Naive thymus-derived CD4-positive, alpha-beta T cell (primary cell): ENCODE measurements at regions of chr1 and their contacts with region 1.

Region 1: DNA sequence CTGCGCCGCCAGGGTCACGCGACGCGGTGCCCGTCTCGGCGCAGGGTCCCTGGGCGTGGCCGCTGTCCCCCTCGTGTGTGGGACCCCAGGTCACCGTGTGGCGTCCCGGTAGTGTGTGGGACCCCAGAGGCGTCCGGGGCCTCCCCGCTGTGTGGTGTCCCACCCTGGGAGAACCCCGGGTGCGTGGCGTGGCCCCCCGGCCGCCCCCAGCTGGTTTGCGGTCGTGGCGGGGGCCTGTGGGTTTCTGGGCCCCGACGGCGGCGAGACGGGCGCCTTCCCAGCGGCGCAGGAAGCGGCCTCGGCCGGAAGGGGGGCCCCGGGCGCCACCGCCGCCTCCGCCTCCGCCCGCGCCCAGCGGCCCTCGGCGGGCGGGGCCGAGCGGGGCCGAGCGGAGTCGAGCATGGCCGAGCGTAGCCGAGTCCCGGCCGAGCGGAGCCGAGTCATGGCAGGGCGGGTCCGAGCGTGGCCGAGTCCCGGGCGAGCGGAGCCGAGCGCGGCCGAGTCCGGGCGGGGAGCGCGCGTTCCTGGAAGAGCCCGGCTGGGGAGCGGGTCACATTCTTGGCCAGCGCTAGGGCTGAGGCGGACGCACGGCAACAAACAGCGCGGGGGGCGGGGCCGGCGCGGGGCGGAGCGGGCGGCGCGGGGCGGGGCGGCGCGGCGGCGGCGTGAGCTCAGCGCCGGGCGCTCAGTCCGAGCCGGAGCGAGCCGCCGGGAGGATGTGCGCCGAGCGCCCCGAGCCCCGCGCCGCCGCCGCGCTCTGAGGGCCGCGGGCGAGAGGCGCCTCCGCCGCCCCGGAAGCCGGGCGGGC is 569 bp upstream of the SKI start:
- DNase-seq: peak; percentile 87 to 98 (median 97)
- ATAC-seq: peak; percentile 88
- H3K4me3 ChIP-seq: peak overlapping the region; percentile 33
- H3K4me3 Mint-ChIP-seq: peak overlapping the region in 9 of 10 donors; percentile 56 to 83 (median 69)
- H3K27ac ChIP-seq: peak overlapping the region; percentile 72
- H3K27ac Mint-ChIP-seq: peak overlapping the region in 4 of 9 donors; percentile 26 to 80 (median 62)
- H3K4me1 ChIP-seq: peaks cover 5 to 14% of the 10 kb centered on the region in 2 donors
- H3K4me1 Mint-ChIP-seq: peaks cover 9 to 24% (median 17%) of the 10 kb centered on the region in 7 donors
- H3K27me3 ChIP-seq: no peaks in the 10 kb centered on the region
- H3K27me3 Mint-ChIP-seq: peaks cover 0 to 8% (median 0%) of the 10 kb centered on the region in 5 donors

Region 2: DNA sequence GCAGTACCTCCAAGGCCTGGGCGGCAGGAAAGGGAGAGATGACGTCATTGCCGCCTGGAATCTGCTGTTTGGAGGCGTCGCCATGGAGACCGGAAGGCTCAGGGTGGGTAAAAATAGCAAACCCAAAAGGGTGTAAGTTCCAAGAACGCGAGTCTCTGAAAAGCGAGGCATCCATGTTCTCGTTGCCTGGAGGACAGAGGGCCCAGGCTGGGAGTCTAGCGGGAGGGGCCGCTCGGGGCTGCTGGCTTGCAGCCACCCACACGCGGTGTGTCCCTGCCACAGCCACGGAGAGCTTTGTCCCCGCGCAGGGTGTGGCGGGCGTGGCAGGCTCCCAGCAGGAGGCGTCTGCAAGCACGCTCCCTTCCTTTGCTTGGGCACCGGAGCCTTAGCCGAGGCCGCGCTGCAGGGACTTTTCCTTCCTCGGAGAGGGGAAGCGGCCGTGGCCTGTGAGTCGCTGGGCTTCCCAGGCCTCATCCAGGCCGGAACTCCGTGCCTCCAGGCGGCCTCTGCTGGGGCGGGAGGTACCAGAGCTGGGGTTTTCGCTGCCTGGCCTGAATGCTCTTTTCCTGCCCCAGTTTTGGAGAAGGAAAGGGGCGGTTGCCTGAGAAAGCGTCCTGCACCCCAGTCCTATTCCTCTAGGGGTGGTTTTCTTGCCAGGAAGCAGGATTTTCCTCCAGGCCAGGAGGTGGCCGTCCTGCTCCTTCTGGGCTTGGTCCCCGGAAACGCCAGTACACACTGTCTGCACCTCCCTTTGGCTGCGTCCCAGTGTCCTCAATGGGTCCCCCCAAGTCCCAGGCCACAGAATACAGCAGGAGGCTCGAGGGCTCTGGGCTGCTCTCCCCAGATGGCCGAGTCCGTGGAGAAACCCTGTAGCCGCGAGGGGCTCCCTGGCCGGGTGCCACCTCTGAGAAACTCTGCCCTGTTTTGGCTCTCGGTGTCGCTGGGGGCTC is 14.7 kb before region 1 on chr1:
- CTCF ChIA-PET with region 1: no interaction called
- POLR2A ChIA-PET with region 1: interaction called, 6 read pairs
- intact Hi-C with region 1: loop called (anchors 1 to 2 kb)
- DNase-seq: peak in 8 of 9 donors; percentile 44 to 71 (median 66)
- ATAC-seq: peak; percentile 79
- H3K4me3 ChIP-seq: peak overlapping the region; percentile 41
- H3K4me3 Mint-ChIP-seq: peak overlapping the region in 6 of 10 donors; percentile 17 to 74 (median 53)
- H3K27ac ChIP-seq: peak overlapping the region; percentile 46
- H3K27ac Mint-ChIP-seq: peak overlapping the region in 7 of 9 donors; percentile 17 to 70 (median 39)
- H3K4me1 ChIP-seq: peaks cover 8 to 13% of the 10 kb centered on the region in 2 donors
- H3K4me1 Mint-ChIP-seq: peaks cover 0 to 11% (median 2%) of the 10 kb centered on the region in 7 donors
- H3K27me3 ChIP-seq: no peaks in the 10 kb centered on the region
- H3K27me3 Mint-ChIP-seq: no peaks in the 10 kb centered on the region

Region 3: DNA sequence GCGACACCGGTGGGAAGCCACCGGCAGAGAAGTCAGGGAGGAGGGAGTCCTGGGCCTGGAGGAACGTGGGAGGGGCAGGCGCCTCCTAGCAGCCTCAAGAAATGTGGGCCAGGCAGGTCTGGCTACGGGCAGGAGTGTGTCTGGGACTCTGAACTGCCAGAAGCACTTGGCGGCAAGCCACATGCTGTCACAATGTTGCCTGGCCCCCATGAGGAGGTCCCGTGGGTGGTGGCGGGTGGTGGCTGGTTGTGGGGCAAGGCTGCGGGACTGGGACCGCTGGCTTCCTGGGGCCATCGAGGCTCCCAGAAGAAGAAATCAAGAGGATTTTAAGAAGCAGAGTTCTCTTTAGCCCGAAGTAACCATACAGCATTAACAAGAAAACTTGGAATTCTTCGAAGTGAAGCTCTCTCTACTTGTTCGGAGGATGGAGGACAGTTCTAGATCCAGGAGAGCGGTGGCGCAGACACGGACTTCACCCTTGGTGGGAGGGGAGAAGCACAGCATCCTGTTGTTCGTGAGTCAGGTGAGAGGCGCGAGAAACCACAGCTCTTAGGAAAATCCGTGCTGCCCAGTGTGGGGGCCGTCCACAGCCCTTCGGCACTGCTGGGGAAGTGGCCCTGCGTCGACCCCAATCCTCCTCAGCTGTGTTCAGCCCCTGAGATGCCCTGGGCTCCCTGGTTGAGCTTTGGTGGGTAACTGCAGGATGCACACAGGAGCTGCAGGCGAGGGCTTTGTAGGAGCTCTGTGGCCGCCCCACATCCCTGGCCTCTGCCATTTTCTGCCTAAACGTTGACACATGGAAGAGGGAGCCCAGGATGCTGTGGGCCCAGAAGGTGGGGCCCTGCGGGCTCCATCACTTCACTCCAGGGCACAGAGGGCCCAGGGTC is 13.0 kb after region 1 on chr1:
- CTCF ChIA-PET with region 1: interaction called, 4 read pairs
- POLR2A ChIA-PET with region 1: interaction called, 99 read pairs
- intact Hi-C with region 1: no loop called
- DNase-seq: peak in 3 of 9 donors; percentile 36 to 68 (median 37)
- ATAC-seq: peak; percentile 30
- H3K4me3 ChIP-seq: peak overlapping the region; percentile 26
- H3K4me3 Mint-ChIP-seq: peak overlapping the region; percentile 40 to 98 (median 84)
- H3K27ac ChIP-seq: peak overlapping the region; percentile 59
- H3K27ac Mint-ChIP-seq: peak overlapping the region; percentile 59 to 97 (median 93)
- H3K4me1 ChIP-seq: peaks cover 47 to 84% of the 10 kb centered on the region in 2 donors
- H3K4me1 Mint-ChIP-seq: peaks cover 66 to 92% (median 83%) of the 10 kb centered on the region in 7 donors
- H3K27me3 ChIP-seq: no peaks in the 10 kb centered on the region
- H3K27me3 Mint-ChIP-seq: no peaks in the 10 kb centered on the region

Region 4: DNA sequence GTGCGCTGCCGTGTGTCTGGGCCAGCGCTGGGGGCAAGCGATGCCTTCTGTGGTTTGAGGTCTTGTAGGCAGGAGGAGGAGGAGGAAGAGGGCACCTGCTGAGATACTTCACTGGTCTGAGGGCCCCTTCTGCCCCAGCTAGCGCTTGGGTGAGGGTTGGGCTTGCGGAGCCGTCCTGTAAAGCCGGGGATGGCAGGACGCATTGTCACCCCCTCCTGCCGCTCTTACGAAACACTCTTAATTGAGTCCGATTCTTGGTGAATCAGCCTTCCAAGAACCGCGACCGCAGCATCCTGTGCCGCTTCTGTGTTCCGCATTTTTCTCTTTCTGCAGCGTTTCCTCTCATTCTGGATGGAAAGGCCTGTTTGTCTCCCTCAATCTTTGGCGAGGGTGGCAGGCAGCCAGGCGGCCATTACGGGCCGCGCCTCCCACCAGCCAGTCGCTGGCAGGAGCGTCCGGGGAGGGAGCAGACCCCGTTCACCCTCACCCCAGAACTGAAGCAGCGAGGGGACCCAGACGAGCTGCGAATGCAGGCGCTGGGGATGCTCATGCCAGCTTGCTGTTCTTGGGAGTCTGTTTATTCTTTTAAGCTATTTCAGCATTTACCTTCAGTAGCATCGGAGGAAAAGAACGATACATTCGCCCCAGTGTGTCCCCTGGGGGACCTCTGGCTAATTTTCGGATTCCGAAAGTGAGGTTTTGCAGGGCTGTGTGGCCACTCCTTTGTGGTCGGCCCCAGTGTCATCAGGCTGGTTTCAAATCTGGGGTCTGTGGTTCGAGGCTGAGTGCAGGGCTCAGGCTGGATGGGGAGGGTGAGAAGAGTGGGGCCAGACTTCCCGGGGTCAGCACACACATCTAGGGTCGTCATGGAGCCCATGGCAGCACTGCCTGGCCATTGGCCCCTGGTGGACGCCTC is 63.3 kb after region 1 on chr1:
- CTCF ChIA-PET with region 1: no interaction called
- POLR2A ChIA-PET with region 1: interaction called, 33 read pairs
- intact Hi-C with region 1: no loop called
- DNase-seq: peak; percentile 44 to 83 (median 79)
- ATAC-seq: peak; percentile 82
- H3K4me3 ChIP-seq: peak overlapping the region; percentile 52
- H3K4me3 Mint-ChIP-seq: peak overlapping the region; percentile 81 to 94 (median 88)
- H3K27ac ChIP-seq: peak overlapping the region; percentile 68
- H3K27ac Mint-ChIP-seq: peak overlapping the region; percentile 95 to 97 (median 96)
- H3K4me1 ChIP-seq: peaks cover 49 to 91% of the 10 kb centered on the region in 2 donors
- H3K4me1 Mint-ChIP-seq: peaks cover 51 to 98% (median 79%) of the 10 kb centered on the region in 7 donors
- H3K27me3 ChIP-seq: no peaks in the 10 kb centered on the region
- H3K27me3 Mint-ChIP-seq: no peaks in the 10 kb centered on the region